ENCODE measurements at regions of chr10 and their contacts with region 1.

Region 1: GRCh38 chr10:28587970-28588290 is 55.0 kb downstream of the WAC start:
- DNase-seq: peak; percentile 33
- H3K4me3 ChIP-seq: no peak overlapping the region
- H3K27ac ChIP-seq: no peak overlapping the region
- H3K4me1 ChIP-seq: peaks cover 9% of the 10 kb centered on the region
- H3K27me3 ChIP-seq: no peaks in the 10 kb centered on the region
- CTCF ChIP-seq: no peak
- POLR2A ChIP-seq: no peak

Region 2: GRCh38 chr10:28432210-28432676 is 155.7 kb before region 1 on chr10:
- CTCF ChIA-PET with region 1: no interaction called
- POLR2A ChIA-PET with region 1: no interaction called
- dilution Hi-C with region 1: no loop called
- intact Hi-C with region 1: loop called (anchors 5 kb)
- DNase-seq: peak; percentile 65
- H3K4me3 ChIP-seq: no peak overlapping the region
- H3K27ac ChIP-seq: no peak overlapping the region
- H3K4me1 ChIP-seq: no peaks in the 10 kb centered on the region
- H3K27me3 ChIP-seq: peaks cover 1% of the 10 kb centered on the region in 2 experiments
- CTCF ChIP-seq: peak; percentile 69 to 76
- POLR2A ChIP-seq: no peak